ENCODE measurements at regions of chr3 and their contacts with region 1.

Region 1: GRCh38 chr3:170037463-170038433 is at the start of gene GPR160:
- DNase-seq: peak; percentile 85
- H3K4me3 ChIP-seq: peak within 1 kb of the TSS; percentile 58 to 62
- H3K27ac ChIP-seq: no peak within 1 kb of the TSS
- H3K4me1 ChIP-seq: peaks cover 0 to 5% of the 10 kb centered on the region in 2 experiments; a peak in 1 of 4 replicates
- H3K27me3 ChIP-seq: peaks cover 24% of the 10 kb centered on the region
- CTCF ChIP-seq: peak; percentile 70
- EP300 ChIP-seq: no peak
- RAD21 ChIP-seq: peak; percentile 63
- polyA plus RNA-seq, gene GPR160: 0.31 and 0.41 TPM in 2 replicates

Region 2: DNA sequence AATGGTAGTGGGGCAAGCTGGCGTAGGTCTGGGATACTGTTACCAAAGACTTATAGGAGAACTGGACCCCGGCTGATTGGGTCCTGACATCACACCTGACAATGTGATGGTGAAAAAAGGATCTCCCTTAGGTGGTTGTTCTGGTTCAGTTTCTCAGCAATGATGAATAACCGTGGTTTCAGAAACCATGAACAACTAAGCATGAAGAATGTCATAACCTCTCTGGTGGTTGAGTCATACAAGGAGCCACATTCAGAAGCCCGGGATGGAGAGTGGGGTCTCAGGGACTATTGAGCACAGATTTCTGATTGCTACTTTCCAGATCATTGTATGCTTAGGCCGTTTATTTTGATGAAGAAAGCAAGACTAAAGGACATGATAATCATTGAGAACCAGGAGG is 17.5 kb after region 1 on chr3:
- CTCF ChIA-PET with region 1: interaction called, 10 read pairs
- POLR2A ChIA-PET with region 1: no interaction called
- DNase-seq: no peak
- H3K4me3 ChIP-seq: no peak overlapping the region
- H3K27ac ChIP-seq: no peak overlapping the region
- H3K4me1 ChIP-seq: no peaks in the 10 kb centered on the region
- H3K27me3 ChIP-seq: no peaks in the 10 kb centered on the region
- CTCF ChIP-seq: no peak
- EP300 ChIP-seq: no peak
- RAD21 ChIP-seq: no peak

Measured in SK-N-SH (cell line).